Panc1 (cell line): ENCODE measurements at regions of chr11 and their contacts with region 1.

Region 1: DNA sequence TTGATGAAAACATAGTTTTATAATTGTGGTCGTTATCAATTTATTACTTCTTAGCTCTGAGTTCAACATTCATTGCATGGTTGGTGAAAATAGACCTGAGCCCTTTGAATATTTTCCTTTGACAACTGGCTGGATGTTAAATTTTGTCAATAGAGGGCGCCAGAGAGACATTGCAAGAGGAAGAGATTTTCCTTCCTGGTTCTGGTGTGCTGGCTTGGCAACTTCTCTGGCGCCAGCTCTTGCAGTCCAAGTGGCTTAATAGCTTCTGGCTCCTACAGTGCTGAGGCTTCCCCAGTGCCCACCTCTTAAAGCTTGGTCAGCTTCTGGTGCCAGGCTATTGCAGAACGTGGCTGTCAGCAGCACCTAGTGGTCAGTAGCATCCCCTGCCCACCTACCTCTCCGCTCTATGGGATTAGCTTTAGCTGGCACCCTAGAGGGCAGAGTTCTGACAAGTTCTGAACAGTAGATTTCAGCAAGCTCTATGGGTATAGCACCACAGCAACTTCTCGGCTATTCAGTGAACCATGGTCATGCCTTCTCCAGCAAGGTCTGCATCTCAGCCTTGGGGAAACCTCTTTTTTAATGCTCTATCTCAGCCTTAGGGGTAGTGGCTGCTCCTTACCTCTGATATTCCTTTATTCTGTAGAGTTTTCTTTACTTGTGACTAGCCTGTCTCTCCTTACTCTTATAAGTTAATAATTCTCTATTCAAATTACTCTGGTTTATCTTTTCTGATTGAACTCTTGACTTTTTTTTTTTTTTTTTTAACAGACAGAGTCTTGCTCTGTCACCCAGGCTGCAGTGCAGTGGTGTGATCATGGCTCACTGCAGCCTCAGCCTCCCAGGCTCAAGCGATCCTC is 59.4 kb downstream of the ACER3 start:
- DNase-seq: peak; percentile 70
- ATAC-seq: peak; percentile 95
- H3K4me3 ChIP-seq: 0 out of 4 replicates have a peak overlapping the region, but pooled peaks of 1 of the 2 experiments have one; percentile 19
- H3K27ac ChIP-seq: no peak overlapping the region
- H3K4me1 ChIP-seq: peaks cover 7% of the 10 kb centered on the region
- H3K27me3 ChIP-seq: no peaks in the 10 kb centered on the region
- CTCF ChIP-seq: peak; percentile 99

Region 2: DNA sequence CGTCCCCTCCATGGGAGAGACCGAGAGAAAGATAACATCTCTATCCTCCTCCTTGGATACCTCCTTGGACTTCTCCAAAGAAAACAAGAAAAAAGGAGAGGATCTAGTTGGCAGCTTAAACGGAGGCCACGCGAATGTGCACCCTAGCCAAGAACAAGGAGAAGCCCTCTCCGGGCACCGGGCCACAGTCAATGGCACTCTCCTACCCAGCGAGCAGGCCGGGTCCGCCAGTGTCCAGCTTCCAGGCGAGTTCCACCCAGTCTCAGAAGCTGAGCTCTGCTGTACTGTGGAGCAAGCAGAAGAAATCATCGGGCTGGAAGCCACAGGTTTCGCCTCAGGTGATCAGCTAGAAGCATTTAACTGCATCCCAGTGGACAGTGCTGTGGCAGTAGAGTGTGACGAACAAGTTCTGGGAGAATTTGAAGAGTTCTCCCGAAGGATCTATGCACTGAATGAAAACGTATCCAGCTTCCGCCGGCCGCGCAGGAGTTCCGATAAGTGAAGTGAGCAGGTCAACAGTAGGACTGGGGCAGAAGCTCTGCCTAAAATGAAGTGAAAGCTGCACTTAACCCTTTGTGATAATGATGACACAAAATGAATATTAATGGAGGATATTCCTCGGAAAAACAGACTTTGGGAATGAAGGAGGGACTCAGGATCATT is 779.1 kb before region 1 on chr11:
- CTCF ChIA-PET with region 1: no interaction called
- POLR2A ChIA-PET with region 1: no interaction called
- in situ Hi-C with region 1: no loop called
- intact Hi-C with region 1: no loop called
- DNase-seq: no peak
- ATAC-seq: no peak
- H3K4me3 ChIP-seq: no peak overlapping the region
- H3K27ac ChIP-seq: no peak overlapping the region
- H3K4me1 ChIP-seq: no peaks in the 10 kb centered on the region
- H3K27me3 ChIP-seq: no peaks in the 10 kb centered on the region
- CTCF ChIP-seq: no peak

Region 3: DNA sequence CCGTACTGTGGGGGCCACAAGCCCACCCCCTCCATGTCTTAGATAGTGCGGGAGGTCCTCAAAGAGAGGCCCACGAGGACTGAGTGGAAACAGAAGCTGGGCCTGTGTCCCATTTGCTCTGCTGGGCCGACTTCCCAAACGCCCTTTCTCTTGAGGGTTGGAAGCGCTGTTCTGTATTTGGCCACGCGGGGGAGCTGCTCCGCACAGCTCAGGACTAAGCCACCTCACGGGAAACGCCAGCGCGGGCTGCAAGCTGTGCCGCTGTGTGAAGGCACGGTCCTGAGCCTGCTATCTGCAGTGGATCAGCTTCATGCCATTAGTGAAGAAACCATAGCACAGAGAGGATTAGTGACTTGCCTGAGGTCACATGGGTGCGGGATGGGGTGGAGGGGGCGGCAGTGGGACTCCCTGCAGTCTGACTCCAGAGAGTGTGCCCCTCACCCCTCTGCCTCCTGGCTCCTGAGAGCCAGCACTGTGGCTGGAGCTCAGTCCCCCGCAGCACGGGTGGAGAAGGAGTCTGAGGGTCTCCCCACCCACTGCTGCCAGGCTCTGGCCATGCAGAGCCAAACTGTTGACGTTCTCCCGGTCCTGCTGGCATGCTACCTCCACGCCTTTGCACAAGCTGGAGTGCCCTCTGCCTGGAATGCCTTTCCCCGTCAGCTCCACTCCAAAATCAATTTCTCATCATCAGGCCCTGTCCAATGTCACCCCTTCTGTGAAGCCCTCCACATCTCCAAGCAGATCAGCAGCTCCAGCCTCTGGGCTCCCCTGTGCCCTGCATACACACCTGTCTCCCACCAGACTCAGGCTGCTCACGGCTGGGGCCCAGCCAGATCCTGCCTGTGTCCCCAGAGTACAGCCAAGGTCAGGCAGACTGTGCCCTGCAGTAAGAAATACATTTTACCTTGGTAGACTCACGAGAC is 198.1 kb before region 1 on chr11:
- CTCF ChIA-PET with region 1: interaction called, 19 read pairs
- POLR2A ChIA-PET with region 1: no interaction called
- in situ Hi-C with region 1: no loop called
- intact Hi-C with region 1: no loop called
- DNase-seq: peak; percentile 55
- ATAC-seq: peak; percentile 98
- H3K4me3 ChIP-seq: peak overlapping the region in 1 of 2 experiments; percentile 7; a peak in 1 of 4 replicates
- H3K27ac ChIP-seq: no peak overlapping the region
- H3K4me1 ChIP-seq: no peaks in the 10 kb centered on the region
- H3K27me3 ChIP-seq: peaks cover 13% of the 10 kb centered on the region
- CTCF ChIP-seq: peak; percentile 99

Region 4: DNA sequence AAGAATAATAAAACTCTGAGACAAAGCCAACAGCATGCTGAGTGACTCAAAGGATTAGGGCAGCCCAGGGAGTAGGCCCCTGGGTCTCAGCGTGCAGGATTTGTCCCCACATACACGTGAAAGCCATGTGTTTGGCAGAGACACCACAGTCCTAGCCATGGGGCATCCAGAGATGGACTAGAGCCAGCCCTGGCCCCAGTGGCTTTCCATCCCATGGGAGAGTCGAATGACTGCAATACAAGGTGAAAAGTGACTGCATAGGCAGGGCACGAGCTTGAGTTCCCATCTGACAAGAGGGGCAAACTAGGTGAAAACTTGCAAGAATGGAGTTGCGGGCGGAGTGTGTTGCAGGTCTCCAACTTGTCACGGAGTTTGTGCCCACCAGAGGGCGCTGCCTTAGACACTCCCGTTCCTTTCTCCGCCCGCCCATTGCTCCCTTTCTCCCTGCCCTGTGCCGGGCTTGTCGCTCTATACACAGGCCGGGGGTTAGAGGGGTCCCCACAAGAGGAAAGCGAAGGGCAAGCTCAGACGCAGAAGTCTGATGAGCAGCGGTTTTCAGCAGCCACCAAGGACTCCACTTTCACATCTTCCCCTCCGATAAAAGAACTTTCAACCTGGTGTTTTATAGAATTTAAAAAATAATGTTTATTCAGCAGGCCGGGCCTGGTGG is 112.8 kb before region 1 on chr11:
- CTCF ChIA-PET with region 1: interaction called, 42 read pairs
- POLR2A ChIA-PET with region 1: no interaction called
- in situ Hi-C with region 1: no loop called
- intact Hi-C with region 1: loop called (anchors 1 kb)
- DNase-seq: peak; percentile 47
- ATAC-seq: peak; percentile 96
- H3K4me3 ChIP-seq: peak overlapping the region in 1 of 2 experiments; percentile 29; a peak in 2 of 4 replicates
- H3K27ac ChIP-seq: no peak overlapping the region
- H3K4me1 ChIP-seq: 0 out of 2 replicates have a peak, but pooled peaks cover 4% of the 10 kb centered on the region
- H3K27me3 ChIP-seq: no peaks in the 10 kb centered on the region
- CTCF ChIP-seq: peak; percentile 95

Region 5: GRCh38 chr11:76975513-76975912 is 55.4 kb after region 1 on chr11:
- CTCF ChIA-PET with region 1: interaction called, 11 read pairs
- POLR2A ChIA-PET with region 1: no interaction called
- in situ Hi-C with region 1: no loop called
- intact Hi-C with region 1: no loop called
- DNase-seq: no peak
- ATAC-seq: no peak
- H3K4me3 ChIP-seq: no peak overlapping the region
- H3K27ac ChIP-seq: no peak overlapping the region
- H3K4me1 ChIP-seq: no peaks in the 10 kb centered on the region
- H3K27me3 ChIP-seq: no peaks in the 10 kb centered on the region
- CTCF ChIP-seq: no peak

Region 6: DNA sequence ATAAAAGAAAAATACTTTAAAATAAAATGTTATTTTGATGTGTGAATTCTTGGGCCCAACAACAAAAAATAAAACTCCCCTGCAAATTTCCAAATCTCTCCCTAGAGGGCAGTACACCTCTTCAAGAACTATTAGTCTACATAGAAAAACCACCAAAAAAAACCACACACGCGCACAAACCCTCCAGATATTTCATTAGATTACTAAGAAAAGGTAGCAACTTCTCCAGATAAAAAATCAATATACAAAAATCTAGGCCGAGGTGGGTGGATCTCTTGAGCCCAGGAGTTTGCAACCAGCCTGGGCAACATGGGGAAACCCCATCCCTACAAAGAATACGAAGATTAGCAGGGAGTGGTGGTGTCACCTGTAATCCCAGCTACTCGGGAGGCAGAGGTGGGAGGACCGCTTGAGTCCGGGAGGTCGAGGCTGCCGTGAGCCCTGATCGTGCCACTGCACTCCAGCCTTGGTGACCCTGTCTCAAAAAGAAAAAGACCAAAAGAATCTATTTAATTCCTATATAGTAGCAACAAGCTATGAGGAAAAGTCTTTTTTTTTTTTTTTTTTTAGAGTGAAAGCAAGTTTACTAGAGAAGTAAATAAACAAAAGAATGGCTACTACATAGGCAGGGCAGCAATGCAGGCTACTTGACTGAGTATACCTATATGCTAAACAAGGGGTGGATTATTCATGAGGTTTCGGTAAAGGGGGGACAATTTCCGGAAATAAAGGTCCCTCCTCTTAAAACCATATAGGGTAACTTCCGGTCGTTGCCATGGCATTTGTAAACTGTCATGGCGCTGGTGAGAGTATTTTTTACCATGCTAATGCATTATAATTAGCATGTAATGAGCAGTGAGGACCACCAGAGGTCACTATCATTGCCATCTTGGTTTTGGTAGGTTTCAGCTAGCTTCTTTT is 127.2 kb after region 1 on chr11:
- CTCF ChIA-PET with region 1: interaction called, 13 read pairs
- POLR2A ChIA-PET with region 1: no interaction called
- in situ Hi-C with region 1: no loop called
- intact Hi-C with region 1: no loop called
- DNase-seq: peak; percentile 87
- ATAC-seq: peak; percentile 89
- H3K4me3 ChIP-seq: peak overlapping the region; percentile 21 to 67
- H3K27ac ChIP-seq: no peak overlapping the region
- H3K4me1 ChIP-seq: peaks cover 7% of the 10 kb centered on the region
- H3K27me3 ChIP-seq: no peaks in the 10 kb centered on the region
- CTCF ChIP-seq: peak; percentile 69